Gastrocnemius medialis (tissue), 4 donors: ENCODE measurements at regions of chr7 and their contacts with region 1.

Region 1: DNA sequence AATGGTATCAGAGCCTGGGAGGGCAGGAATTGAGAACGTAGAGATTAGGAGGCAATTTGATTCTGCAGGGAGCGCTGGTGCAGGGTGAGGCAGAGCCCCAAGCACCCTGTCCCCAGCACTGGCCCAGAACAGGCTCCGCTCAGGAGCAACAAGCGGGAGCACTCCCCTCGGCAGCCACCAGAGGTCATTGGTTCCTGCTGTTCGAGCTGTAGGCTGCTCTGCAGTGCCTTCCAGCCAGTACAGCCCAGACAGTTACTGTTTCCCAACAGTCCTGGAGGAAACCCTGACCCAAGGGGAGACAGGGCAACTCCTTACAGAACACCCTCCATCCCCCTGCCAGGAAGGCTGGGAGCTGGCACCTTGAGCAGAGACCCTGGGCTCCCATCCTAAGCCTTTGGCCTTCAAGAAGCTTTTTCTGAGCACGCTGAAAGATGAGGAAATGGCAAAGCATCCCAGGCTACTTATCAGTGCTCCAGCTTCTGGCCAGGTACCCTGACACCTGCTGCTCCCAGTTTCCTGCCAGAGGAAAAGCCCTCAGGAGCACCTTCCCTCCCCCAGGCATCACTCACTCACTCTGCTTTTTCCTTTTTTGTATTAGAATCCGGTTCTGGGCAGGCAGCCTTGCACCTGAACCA is 71.2 kb upstream of the EFCAB10 start:
- DNase-seq: peak; percentile 53 to 66
- ATAC-seq: peak; percentile 85 to 90
- H3K4me3 ChIP-seq: no peak overlapping the region
- H3K27ac ChIP-seq: no peak overlapping the region
- H3K4me1 ChIP-seq: peaks cover 14 to 21% of the 10 kb centered on the region in 2 donors
- H3K27me3 ChIP-seq: no peaks in the 10 kb centered on the region
- CTCF ChIP-seq: peak; percentile 64 to 89 (median 86)
- POLR2A ChIP-seq: no peak

Region 2: DNA sequence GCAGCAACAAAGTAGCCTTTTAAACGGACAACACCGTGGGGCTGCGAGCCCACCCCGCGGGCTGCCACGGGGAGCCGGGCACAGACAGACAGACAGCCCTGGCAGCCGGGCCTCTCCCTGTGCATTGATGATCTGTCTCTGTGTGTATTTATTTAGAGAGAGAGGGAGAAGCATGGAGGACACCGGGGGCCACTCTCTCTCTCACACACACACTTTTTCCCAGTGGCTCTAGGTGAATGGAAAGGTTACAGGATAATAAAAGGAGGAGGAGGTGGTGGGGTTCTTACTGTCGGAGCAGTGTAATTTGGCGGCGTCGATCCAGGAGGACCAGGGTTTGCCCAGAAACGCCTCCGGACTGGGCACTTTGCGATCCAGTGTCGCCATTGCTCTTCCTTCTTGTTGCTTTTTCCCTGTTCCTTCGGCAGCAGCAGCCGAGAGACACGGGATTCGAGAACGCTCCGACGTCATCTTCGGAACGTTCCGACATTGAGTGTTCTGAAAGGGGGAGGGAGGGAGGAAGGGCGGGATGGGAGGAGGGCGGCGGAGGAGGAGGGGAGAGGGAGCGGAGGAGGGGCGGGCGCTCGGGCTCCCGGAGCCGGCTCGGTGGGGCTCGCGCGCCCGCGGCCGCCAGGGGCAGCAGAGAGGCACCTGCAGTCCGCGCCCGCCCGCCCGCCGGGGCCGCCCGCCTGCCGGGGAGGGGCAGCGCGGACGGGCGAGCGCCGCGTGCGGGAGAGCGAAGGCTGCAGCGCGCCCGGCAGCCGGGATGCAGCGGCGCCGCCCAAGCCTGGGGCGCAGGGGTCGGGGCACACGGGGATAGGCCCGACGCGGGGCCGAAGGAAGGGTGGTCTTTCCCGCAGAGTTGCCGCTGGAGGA is 223.9 kb after region 1 on chr7 and contains the start of gene ATXN7L1:
- in situ Hi-C with region 1: no loop called
- intact Hi-C with region 1: no loop called
- DNase-seq: peak; percentile 93 to 94
- ATAC-seq: peak; percentile 98
- H3K4me3 ChIP-seq: peak within 1 kb of the TSS; percentile 70 to 91 (median 81)
- H3K27ac ChIP-seq: peak within 1 kb of the TSS; percentile 80 to 89 (median 84)
- H3K4me1 ChIP-seq: peaks cover 18% of the 10 kb centered on the region in 2 donors
- H3K27me3 ChIP-seq: no peaks in the 10 kb centered on the region
- CTCF ChIP-seq: peak; percentile 51 to 91 (median 82)
- POLR2A ChIP-seq: peak; percentile 44 to 80
- total RNA-seq, gene ATXN7L1: 1.6 to 6.6 (median 4.8) TPM

Region 3: DNA sequence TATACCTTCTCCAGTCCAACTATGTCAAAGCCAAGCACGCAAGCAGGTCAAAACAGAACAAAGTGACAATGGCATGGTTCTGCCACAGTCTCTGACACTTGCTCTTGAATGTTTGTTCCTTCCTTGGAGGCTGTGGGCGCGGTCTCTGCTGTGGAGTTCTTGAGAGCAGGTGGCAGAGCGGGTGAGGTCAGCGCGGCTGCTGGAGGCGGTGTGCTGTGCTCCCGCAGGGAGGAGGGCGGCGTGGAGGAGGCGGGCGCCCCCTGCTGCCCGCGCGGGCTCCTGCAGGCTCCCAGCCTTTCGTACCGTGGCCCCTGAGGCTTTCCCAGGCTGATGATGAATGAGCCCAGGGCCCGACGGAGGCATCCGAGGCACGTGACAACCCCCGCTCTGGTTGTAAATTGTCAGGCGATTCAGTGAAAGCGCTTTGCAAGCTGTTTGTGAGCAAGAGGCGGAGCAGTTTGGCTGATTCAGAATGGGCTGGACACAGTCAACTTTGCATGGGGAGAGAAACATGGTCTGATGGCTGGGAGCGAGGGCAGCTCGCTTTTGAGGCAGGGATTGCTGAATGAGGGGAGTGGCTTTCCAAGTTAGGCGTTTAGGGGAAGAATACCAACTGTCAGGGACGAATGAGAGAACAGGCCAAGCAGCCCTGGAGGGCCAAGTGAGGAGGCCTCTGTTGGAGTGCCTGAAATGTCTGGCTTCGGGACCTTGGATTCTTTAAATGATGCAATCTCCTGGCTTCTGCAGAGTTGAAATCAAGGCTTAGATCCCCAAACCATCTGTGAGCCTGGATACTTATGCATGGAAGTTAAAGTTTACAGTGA is 357.1 kb after region 1 on chr7:
- in situ Hi-C with region 1: loop called in 1 of 4 experiments (anchors 10 kb)
- intact Hi-C with region 1: loop called (anchors 1 kb)
- DNase-seq: peak; percentile 43 to 67
- ATAC-seq: peak; percentile 82 to 93
- H3K4me3 ChIP-seq: peak overlapping the region in 1 of 4 donors; percentile 8
- H3K27ac ChIP-seq: no peak overlapping the region
- H3K4me1 ChIP-seq: peaks cover 0 to 7% of the 10 kb centered on the region in 2 donors
- H3K27me3 ChIP-seq: no peaks in the 10 kb centered on the region
- CTCF ChIP-seq: peak; percentile 94 to 98 (median 96)
- POLR2A ChIP-seq: no peak

Region 4: DNA sequence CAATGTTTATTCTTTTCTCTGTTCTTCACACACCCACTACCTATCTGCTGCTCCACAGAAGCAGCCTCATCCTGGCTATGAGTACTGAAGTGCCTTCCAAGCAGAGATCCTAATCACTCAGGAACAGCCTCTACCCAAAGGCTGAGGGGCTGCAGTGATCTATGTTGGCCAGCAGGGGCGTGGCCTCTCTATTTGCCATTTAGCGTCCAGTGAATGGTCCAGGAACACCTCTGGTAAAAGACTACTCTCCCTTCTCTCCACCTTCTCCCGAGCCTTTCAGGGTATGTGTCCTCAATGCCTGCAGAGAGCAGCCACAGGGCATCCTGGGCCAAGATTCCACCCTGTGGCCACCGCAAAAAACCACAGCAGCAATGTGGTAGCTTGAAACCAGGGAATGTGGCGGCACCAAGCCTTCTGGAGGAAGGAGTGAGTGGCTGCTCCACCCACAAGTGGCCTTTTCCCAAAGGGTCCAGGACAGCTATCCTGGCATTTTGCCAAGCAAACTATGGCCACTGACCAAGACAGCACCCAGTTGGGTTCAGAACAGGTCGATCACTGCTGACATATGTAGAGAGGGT is 388.8 kb after region 1 on chr7:
- in situ Hi-C with region 1: loop called (anchors 10 to 25 kb)
- intact Hi-C with region 1: loop called (anchors 2 kb)
- DNase-seq: no peak
- ATAC-seq: peak in 1 of 2 donors; percentile 43
- H3K4me3 ChIP-seq: no peak overlapping the region
- H3K27ac ChIP-seq: no peak overlapping the region
- H3K4me1 ChIP-seq: peaks cover 4 to 7% of the 10 kb centered on the region in 2 donors
- H3K27me3 ChIP-seq: no peaks in the 10 kb centered on the region
- CTCF ChIP-seq: peak; percentile 44 to 70 (median 53)
- POLR2A ChIP-seq: no peak

Region 5: DNA sequence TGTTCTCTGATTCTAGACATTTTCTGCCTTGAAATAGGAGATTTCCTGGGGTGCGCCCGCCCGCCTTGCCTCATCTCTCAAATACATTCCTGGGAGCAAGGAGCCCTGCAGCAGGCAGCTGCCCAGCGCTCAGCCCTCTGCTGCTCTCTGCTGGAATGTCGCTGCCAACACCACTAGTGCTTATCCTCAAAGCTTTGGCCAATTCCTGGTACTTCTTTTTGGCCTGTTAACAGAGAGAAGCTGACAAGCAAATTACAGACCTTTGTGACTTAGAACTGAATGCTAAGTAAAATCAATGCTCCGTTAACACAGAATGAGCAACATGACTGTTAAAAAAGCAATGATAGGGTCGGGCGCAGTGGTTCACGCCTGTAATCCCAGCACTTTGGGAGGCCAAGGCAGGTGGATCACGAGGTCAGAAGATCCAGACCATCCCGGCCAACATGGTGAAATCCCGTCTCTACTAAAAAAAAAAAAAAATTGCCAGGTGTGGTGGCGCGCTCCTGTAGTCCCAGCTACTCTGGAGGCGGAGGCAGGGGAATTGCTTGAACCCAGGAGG is 501.5 kb after region 1 on chr7:
- in situ Hi-C with region 1: loop called in 1 of 4 experiments (anchors 25 kb)
- intact Hi-C with region 1: no loop called
- DNase-seq: peak; percentile 66 to 79
- ATAC-seq: peak; percentile 89 to 98
- H3K4me3 ChIP-seq: peak overlapping the region in 2 of 4 donors; percentile 24 to 26
- H3K27ac ChIP-seq: no peak overlapping the region
- H3K4me1 ChIP-seq: peaks cover 13 to 19% of the 10 kb centered on the region in 2 donors
- H3K27me3 ChIP-seq: no peaks in the 10 kb centered on the region
- CTCF ChIP-seq: peak; percentile 95 to 98 (median 97)
- POLR2A ChIP-seq: no peak